HepG2 (cell line): ENCODE measurements at regions of chr2 and their contacts with region 1.

Region 1: DNA sequence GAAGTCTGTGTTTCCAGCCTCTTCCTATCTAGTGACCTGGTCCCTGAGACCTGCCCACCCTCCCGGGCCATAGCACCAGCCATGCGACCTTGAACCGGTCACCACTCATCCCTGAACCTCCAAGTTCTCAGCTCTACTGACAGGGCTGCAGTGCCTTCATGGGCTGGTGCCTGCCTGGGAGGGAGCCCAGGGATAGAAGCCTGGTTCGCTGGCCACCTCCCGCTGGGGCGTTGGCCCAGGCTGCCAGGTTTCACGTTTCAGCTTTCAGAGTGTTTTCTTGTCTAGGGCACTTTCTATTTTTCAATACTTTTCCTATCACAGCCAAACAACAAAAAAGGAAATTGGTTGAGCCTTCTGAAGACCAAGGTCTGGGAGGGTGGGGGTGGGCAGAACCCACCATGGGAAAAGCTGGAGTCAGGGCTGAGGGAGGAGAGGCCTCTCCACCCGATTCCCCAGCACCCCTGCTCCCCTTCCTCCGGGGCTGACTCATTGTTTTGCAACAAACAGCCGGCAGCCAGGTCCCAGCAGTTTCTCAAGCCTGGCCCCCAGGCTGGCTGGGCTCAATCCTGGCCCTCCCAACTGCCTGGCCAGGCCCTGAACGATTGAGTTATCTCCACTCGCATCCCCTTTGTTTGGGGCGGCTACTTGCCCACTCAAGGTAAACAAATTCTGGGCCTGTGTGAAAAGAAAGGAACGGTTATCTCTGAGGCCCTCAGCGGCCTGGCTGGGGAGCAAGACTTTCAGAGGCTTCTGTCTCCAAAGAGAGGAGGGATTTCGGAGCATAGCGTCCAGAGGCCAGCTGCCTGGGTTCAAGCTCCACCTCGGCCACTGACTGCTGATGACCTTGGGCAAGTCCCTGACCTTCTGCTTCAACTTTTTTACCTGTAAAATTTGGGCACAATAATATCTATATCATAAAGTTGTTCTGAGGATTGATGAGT is 47.5 kb downstream of the ZFP36L2 start:
- DNase-seq: peak; percentile 90
- ATAC-seq: peak; percentile 88
- H3K4me3 ChIP-seq: peak overlapping the region; percentile 43 to 62 (median 61)
- H3K27ac ChIP-seq: peak overlapping the region; percentile 81
- H3K4me1 ChIP-seq: peaks cover 77% of the 10 kb centered on the region
- H3K27me3 ChIP-seq: no peaks in the 10 kb centered on the region
- CTCF ChIP-seq: peak; percentile 1; the same call in 1 of the 2 replicates
- EP300 ChIP-seq: peak in 1 of 2 experiments; percentile 77; a peak in 2 of 4 replicates
- POLR2A ChIP-seq: no peak; a peak in 1 of 4 replicates
- RAD21 ChIP-seq: peak; percentile 20; the same call in 1 of the 2 replicates

Region 2: GRCh38 chr2:43199492-43200481 is 20.9 kb after region 1 on chr2:
- CTCF ChIA-PET with region 1: no interaction called
- POLR2A ChIA-PET with region 1: interaction called, 97 read pairs
- in situ Hi-C with region 1: no loop called
- intact Hi-C with region 1: loop called (anchors 1 kb)
- DNase-seq: peak; percentile 83
- ATAC-seq: peak; percentile 85
- H3K4me3 ChIP-seq: peak overlapping the region; percentile 3 to 51 (median 36); a peak in 5 of 6 replicates
- H3K27ac ChIP-seq: peak overlapping the region; percentile 46
- H3K4me1 ChIP-seq: peaks cover 76% of the 10 kb centered on the region
- H3K27me3 ChIP-seq: no peaks in the 10 kb centered on the region
- CTCF ChIP-seq: peak; percentile 62
- EP300 ChIP-seq: peak in 1 of 2 experiments; percentile 36; a peak in 1 of 4 replicates
- POLR2A ChIP-seq: peak in 1 of 2 experiments; percentile 35; a peak in 1 of 4 replicates
- RAD21 ChIP-seq: no peak

Region 3: GRCh38 chr2:43233218-43234212 is 54.6 kb after region 1 on chr2:
- CTCF ChIA-PET with region 1: no interaction called
- POLR2A ChIA-PET with region 1: no interaction called
- in situ Hi-C with region 1: no loop called
- intact Hi-C with region 1: no loop called
- DNase-seq: no peak
- ATAC-seq: no peak
- H3K4me3 ChIP-seq: no peak overlapping the region
- H3K27ac ChIP-seq: no peak overlapping the region
- H3K4me1 ChIP-seq: peaks cover 36% of the 10 kb centered on the region
- H3K27me3 ChIP-seq: no peaks in the 10 kb centered on the region
- CTCF ChIP-seq: no peak
- EP300 ChIP-seq: no peak
- POLR2A ChIP-seq: no peak
- RAD21 ChIP-seq: no peak